ENCODE measurements at regions of chr17 and their contacts with region 1.

Region 1: GRCh38 chr17:979538-980405 is at the start of gene NXN:
- DNase-seq: peak; percentile 76 to 100 (median 92)
- ATAC-seq: peak; percentile 85 to 93 (median 89)
- H3K4me3 ChIP-seq: peak within 1 kb of the TSS; percentile 69 to 87 (median 72)
- H3K27ac ChIP-seq: peak within 1 kb of the TSS; percentile 68 to 85 (median 74)
- H3K4me1 ChIP-seq: peaks cover 0 to 27% (median 2%) of the 10 kb centered on the region in 3 donors
- H3K27me3 ChIP-seq: no peaks in the 10 kb centered on the region
- CTCF ChIP-seq: no peak
- total RNA-seq, gene NXN: 25.2 to 35.0 (median 30.7) TPM

Region 2: DNA sequence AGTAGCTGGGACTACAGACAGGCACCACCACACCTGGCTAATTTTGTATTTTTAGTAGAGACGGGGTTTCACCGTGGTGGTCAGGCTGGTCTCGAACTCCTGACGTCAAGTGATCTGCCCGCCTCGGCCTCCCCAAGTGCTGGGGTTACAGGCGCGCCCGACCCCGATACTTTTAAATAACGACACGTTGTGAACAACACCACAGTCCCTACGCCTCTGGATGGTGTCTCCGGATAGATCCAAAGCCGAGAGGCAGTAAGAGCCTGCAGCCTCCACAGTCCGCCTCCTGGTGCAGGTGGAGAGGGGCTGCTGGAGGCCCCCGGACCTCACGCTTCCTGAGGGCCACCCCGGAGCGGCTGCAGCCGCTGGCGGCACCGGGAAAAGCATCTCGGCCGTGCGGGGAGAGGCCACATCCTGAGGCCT is 248.1 kb before region 1 on chr17:
- intact Hi-C with region 1: no loop called
- DNase-seq: peak in 1 of 6 donors; percentile 26
- ATAC-seq: peak in 2 of 4 donors; percentile 31 to 33
- H3K4me3 ChIP-seq: peak overlapping the region; percentile 72 to 92 (median 82)
- H3K27ac ChIP-seq: peak overlapping the region; percentile 55 to 66 (median 60)
- H3K4me1 ChIP-seq: peaks cover 0 to 13% (median 0%) of the 10 kb centered on the region in 3 donors
- H3K27me3 ChIP-seq: no peaks in the 10 kb centered on the region
- CTCF ChIP-seq: no peak

Region 3: DNA sequence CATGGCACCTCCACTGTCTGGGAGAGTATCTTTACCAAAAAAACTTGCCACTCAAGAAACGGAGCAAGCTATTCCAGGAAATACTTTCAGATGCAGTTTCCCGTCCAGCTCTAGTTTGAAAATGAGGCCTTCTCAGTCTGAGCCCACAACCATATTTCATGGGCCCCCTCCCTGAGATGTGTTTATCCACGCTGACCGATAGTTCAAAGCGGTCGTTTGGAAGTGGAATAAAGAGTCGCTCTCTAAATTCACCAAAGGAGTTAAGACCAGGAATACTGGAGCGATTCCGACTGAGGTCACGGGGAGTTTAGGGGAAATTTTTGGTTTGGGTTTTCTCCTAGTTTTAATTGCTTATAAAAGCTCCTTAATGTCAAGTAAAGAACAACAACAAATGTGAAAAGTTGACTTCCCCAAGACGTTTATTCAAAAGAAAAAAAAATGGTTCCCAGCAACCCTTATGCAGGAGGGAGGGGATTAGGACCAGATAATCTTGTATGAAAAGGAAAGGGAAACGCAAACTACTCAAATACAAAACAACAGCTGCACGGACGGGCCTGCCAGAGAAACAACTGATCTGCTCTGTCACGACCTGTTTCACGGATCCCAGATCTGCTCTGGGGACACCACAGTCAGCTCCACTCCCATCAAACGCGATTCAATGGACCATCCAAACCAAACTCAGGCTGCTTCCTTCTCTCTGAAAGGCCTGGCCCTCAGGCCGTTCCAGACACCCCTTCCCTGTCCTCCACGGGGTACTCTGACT is 120.5 kb before region 1 on chr17:
- intact Hi-C with region 1: no loop called
- DNase-seq: no peak
- ATAC-seq: peak in 1 of 4 donors; percentile 15
- H3K4me3 ChIP-seq: no peak overlapping the region
- H3K27ac ChIP-seq: peak overlapping the region in 2 of 4 donors; percentile 44 to 47
- H3K4me1 ChIP-seq: peaks cover 0 to 2% (median 0%) of the 10 kb centered on the region in 3 donors
- H3K27me3 ChIP-seq: no peaks in the 10 kb centered on the region
- CTCF ChIP-seq: no peak

Region 4: GRCh38 chr17:879549-880442 is 100.0 kb before region 1 on chr17:
- intact Hi-C with region 1: loop called in 1 of 3 experiments (anchors 5 kb)
- DNase-seq: peak; percentile 80 to 96 (median 94)
- ATAC-seq: peak; percentile 68 to 80 (median 76)
- H3K4me3 ChIP-seq: no peak overlapping the region
- H3K27ac ChIP-seq: peak overlapping the region; percentile 33 to 88 (median 76)
- H3K4me1 ChIP-seq: peaks cover 32 to 45% (median 37%) of the 10 kb centered on the region in 3 donors
- H3K27me3 ChIP-seq: no peaks in the 10 kb centered on the region
- CTCF ChIP-seq: peak; percentile 49 to 68 (median 62)

Region 5: DNA sequence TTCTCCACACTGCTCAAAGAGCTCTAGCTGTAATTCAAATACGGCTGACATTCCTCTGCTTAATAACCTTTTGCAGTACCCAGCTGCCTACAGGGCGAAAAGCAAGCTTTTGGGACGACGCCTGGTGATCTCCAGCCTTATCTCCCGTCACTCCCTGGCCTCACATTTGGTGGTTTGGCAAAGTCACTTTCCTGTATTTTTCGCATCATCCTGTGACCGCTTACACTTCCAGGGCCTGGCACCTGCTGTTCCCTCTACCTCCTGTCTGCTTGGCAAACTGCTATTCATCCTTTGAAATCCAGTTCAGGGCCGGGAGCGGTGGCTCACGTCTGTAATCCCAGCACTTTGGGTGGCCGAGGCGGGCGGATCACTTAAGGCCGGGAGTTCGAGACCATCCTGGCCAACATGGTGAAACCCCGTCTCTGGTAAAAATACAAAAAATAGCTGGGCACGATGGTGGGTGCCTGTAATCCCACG is 287.7 kb after region 1 on chr17:
- intact Hi-C with region 1: no loop called
- DNase-seq: no peak
- ATAC-seq: peak; percentile 13 to 37 (median 32)
- H3K4me3 ChIP-seq: peak overlapping the region; percentile 24 to 66 (median 58)
- H3K27ac ChIP-seq: peak overlapping the region; percentile 79 to 91 (median 84)
- H3K4me1 ChIP-seq: peaks cover 0 to 7% (median 0%) of the 10 kb centered on the region in 3 donors
- H3K27me3 ChIP-seq: no peaks in the 10 kb centered on the region
- CTCF ChIP-seq: no peak